ENCODE measurements at regions of chr5 and their contacts with region 1.

Region 1: DNA sequence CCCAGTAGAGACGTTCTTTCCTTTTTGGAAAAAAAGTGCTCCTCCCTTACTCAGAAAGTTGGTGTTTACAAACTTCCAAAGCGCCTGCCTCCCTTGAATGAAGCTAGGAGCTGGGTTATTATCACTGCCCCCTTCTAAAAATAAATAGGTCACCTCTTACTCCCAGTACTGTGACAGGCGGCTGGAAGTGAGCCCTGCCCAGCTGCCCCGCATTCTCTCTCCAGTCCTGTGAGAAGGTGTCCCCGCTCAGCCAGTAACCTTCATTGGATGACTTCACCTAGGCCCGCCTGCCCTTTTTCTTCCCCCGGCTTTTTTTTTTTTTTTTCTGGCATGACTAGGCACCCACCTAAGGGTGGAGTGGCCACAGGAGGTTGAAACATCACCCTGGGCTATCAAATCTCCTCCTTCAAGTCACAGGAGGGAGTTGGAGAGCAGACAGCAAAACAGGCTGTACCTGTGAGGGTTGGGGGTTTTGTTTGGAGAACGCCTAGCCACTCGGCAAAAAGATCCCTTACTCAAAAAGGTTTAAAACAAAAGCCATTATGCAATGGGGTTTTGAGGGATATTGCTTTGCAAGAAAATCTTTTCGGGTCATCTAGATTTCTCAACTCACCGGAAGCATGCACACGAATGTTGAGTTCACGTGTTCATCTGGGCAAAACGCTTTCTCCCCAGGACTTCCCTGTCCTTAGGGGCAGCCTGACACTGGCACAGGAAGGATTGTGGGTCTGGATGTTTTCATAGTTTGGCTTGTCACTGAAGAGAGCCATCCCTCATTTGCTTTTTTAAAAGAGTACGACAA is 43.3 kb upstream of the ZNF622 start:
- DNase-seq: peak; percentile 82
- ATAC-seq: peak; percentile 89

Region 2: DNA sequence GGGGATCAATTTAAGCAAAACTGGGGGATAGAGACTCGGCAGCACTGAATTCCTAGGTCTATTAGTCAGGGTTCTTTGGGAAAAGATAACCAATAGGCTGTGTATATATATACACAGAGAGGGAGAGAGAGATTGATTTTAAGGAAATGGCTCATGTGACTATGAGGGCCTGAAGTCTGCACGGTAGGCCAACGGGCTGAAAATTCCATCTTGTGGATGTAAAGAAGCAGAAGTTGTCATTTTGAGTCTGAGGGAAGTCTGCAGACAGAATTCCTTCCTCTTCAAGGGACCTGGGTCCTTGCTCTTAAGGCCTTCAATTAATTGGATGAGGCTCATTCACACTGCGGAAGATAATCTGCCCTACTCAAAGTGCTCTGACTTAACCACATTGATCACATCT is 16.7 kb after region 1 on chr5:
- intact Hi-C with region 1: loop called (anchors 2 kb)
- DNase-seq: no peak
- ATAC-seq: no peak

Region 3: DNA sequence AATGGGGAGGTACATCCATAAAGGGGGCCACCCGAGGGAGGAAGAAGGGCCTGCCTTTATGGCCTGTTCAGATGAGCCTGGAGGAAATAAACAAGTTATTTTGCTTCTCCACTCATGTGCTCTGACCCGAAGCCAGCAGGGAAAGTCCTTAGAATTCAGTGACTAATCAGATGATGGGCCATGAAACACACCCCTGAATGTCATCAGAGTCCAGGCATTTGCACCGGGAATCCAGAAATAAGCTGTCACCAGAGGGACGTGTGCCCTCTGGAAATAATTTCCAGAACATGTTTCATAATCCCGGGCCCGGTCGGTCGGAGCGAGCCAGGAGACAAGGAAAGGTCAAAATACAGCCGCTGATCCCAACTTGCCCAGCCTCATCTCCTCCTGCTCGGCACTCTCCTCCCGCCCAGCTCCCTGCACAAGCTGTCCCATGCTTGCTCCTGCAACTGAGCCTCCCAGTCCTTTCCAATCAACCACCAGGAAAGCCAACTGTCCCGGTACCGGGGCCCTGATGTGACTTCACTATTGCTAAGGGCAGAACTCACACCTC is 30.3 kb after region 1 on chr5:
- intact Hi-C with region 1: loop called (anchors 1 kb)
- DNase-seq: peak; percentile 89
- ATAC-seq: peak; percentile 96

Measured in Right ventricle myocardium inferior (tissue), 1 donor.